ENCODE measurements at regions of chr17 and their contacts with region 1.

Region 1: GRCh38 chr17:32877164-32877764 is 340 bp upstream of the MYO1D start:
- DNase-seq: peak; percentile 87
- H3K4me3 ChIP-seq: peak overlapping the region; percentile 37 to 96 (median 81)
- H3K27ac ChIP-seq: peak overlapping the region; percentile 98
- H3K4me1 ChIP-seq: peaks cover 29% of the 10 kb centered on the region
- H3K27me3 ChIP-seq: no peaks in the 10 kb centered on the region
- CTCF ChIP-seq: peak; percentile 63 to 80

Region 2: DNA sequence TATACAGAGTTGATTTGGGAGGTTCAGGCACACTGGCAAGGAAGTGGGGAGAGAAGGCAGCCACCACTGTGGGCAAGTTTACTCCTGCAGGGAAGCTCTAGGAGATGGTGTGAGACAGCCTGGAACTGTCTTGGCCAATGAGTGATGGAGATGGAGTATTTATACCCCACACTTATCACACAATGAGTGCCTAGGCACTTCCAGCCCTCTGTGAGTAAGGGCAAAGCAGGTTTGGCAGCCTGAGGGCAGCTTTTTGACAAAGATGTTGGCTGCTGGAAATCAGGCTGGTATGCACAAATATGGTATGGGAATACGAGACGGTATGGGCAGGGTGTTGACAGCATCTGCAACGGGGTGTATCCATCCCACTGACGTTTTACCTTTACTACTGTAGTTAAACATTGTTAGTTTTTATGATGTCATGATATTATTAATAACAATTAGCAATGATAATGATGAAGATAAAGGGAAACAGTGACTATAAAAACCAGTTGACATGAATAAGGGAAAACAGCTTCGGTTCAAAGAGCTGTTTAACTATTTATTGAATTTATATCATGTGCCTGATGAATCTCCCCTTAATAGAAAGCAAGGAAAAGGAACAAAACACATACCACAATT is 240.6 kb before region 1 on chr17:
- CTCF ChIA-PET with region 1: no interaction called
- dilution Hi-C with region 1: no loop called
- in situ Hi-C with region 1: no loop called
- intact Hi-C with region 1: no loop called
- DNase-seq: no peak
- H3K4me3 ChIP-seq: no peak overlapping the region
- H3K27ac ChIP-seq: no peak overlapping the region
- H3K4me1 ChIP-seq: peaks cover 5% of the 10 kb centered on the region
- H3K27me3 ChIP-seq: no peaks in the 10 kb centered on the region
- CTCF ChIP-seq: no peak

Region 3: DNA sequence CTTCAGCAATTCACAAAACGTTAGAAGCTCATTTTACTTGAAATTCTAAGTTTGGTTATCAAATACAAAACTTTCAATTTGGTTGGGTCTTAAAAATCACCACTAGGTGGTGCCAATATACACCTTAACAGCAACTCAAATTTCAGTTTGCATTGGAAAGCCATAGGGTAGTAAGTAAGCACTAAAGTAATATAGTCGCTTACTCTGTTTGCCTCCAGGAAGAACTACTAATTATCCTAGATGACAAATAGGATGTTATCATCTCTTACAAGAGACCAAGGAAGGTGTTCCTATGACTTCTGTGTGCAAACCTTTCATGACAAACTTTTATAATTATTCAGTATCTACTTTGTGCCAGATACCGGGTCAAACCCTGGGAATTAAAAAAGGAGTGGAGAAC is 93.7 kb before region 1 on chr17:
- CTCF ChIA-PET with region 1: interaction called, 16 read pairs
- dilution Hi-C with region 1: no loop called
- in situ Hi-C with region 1: loop called in 1 of 2 experiments (anchors 10 kb)
- intact Hi-C with region 1: loop called (anchors 1 kb)
- DNase-seq: peak; percentile 43
- H3K4me3 ChIP-seq: no peak overlapping the region
- H3K27ac ChIP-seq: no peak overlapping the region
- H3K4me1 ChIP-seq: no peaks in the 10 kb centered on the region
- H3K27me3 ChIP-seq: no peaks in the 10 kb centered on the region
- CTCF ChIP-seq: peak; percentile 56 to 63

Region 4: GRCh38 chr17:32909787-32910369 is 32.6 kb after region 1 on chr17:
- CTCF ChIA-PET with region 1: interaction called, 6 read pairs
- dilution Hi-C with region 1: no loop called
- in situ Hi-C with region 1: no loop called
- intact Hi-C with region 1: loop called (anchors 1 kb)
- DNase-seq: peak; percentile 69
- H3K4me3 ChIP-seq: no peak overlapping the region
- H3K27ac ChIP-seq: no peak overlapping the region
- H3K4me1 ChIP-seq: no peaks in the 10 kb centered on the region
- H3K27me3 ChIP-seq: no peaks in the 10 kb centered on the region
- CTCF ChIP-seq: peak; percentile 87 to 88

Region 5: GRCh38 chr17:32992321-32993033 is 115.2 kb after region 1 on chr17:
- CTCF ChIA-PET with region 1: interaction called, 10 read pairs
- dilution Hi-C with region 1: no loop called
- in situ Hi-C with region 1: no loop called
- intact Hi-C with region 1: loop called (anchors 5 kb)
- DNase-seq: no peak
- H3K4me3 ChIP-seq: no peak overlapping the region
- H3K27ac ChIP-seq: no peak overlapping the region
- H3K4me1 ChIP-seq: no peaks in the 10 kb centered on the region
- H3K27me3 ChIP-seq: no peaks in the 10 kb centered on the region
- CTCF ChIP-seq: no peak

Region 6: GRCh38 chr17:33049781-33050414 is 172.6 kb after region 1 on chr17:
- CTCF ChIA-PET with region 1: interaction called, 15 read pairs
- dilution Hi-C with region 1: no loop called
- in situ Hi-C with region 1: no loop called
- intact Hi-C with region 1: no loop called
- DNase-seq: no peak
- H3K4me3 ChIP-seq: no peak overlapping the region
- H3K27ac ChIP-seq: no peak overlapping the region
- H3K4me1 ChIP-seq: peaks cover 15% of the 10 kb centered on the region
- H3K27me3 ChIP-seq: no peaks in the 10 kb centered on the region
- CTCF ChIP-seq: peak; percentile 89 to 93

Measured in mammary epithelial cell (primary cell).